KBM-7 (cell line): ENCODE measurements at regions of chr4 and their contacts with region 1.

Region 1: GRCh38 chr4:83516042-83516772 is 19.7 kb upstream of the GPAT3 start:
- DNase-seq: no peak

Region 2: GRCh38 chr4:84503495-84504437 is 987.6 kb after region 1 on chr4:
- in situ Hi-C with region 1: loop called (anchors 25 kb)
- DNase-seq: peak; percentile 79